ENCODE measurements at regions of chr2 and their contacts with region 1.

Region 1: DNA sequence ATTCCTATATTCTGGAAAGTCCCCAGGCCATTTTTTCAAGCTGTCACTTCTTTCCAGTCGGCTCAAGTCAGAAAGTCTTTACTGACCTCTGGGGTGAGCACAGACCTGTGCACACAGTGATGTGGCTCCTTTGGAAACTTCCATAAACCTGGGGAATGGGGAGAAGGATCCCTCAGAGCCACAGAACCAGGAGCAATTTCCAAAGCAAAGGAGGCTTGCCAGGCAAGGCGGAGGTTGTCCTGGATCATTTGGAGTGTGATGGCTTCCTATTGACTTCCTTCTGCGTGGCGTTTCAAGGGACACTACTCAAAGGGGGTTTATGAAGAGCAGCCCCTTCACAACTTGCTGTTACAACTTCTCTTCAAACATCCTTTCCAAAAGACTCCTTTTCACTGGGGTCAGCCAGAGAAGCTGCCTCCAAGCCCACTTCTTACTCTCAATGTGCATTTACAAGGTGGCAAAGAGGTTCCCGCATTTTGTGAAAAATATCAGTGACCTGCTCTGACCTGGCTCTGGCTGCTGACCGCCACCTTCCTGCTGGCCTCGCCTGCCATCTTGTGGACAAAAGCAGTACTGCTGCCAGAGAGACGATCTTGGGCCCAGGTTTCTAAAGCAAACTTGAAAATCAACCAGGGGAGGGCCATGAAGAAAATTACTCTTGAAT is 18.2 kb upstream of the TMEM247 start:
- DNase-seq: peak; percentile 65
- ATAC-seq: peak; percentile 79
- H3K4me3 ChIP-seq: no peak overlapping the region
- H3K27ac ChIP-seq: peak overlapping the region; percentile 6; the same call in 1 of the 2 replicates
- H3K4me1 ChIP-seq: peaks cover 15% of the 10 kb centered on the region
- H3K27me3 ChIP-seq: no peaks in the 10 kb centered on the region
- CTCF ChIP-seq: peak; percentile 97
- POLR2A ChIP-seq: peak; percentile 55; the same call in 1 of the 2 replicates
- RAD21 ChIP-seq: peak; percentile 100

Region 2: DNA sequence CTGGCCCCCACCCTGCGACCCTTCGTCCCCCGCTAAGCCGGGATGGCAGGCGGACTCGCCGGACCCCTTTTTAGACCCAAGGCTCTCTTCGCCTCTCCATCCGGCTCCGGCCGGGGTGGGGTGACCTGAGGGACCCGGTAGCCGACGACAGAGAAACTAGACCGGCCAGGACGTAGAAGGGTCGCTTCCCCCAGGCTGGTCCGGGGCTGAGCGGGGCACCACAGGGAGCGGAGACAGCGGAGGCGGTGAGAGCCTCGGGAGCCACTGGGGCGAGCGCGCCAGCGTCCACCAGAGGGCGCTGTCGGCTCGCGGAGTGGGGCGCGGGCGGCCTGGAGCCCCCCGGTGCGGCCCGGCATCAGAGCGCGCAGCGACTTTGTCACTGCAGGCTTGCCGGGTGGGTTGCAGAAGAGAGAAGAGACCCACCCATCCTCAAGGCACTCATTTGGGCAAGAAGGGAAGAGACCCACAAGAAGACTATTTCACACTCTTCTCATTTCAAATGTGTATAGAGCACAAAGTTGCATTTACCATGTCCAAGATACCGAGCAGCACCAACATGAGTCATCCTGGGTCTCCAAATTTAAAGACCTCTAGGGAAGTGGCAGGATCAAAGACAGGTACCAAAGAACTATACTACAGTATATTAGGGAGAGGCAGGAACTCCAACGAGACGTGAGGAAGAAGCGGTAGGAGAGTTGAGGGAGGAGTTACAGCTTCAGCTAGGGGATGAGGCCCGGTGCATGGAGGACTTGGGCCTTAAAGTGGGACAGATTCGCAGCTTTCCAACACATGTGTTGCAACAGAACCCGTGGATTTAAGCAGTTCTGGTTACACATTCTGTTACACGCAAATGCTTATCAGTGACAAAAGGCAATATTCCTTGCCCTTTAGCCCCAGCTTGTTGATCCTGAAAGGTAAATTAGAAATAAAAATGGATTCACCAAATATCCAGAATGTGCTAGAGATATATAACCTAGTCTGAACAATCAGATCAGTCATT is 817.3 kb before region 1 on chr2:
- CTCF ChIA-PET with region 1: no interaction called
- POLR2A ChIA-PET with region 1: no interaction called
- dilution Hi-C with region 1: no loop called
- in situ Hi-C with region 1: no loop called
- intact Hi-C with region 1: loop called (anchors 1 kb)
- DNase-seq: peak; percentile 31
- ATAC-seq: peak; percentile 99
- H3K4me3 ChIP-seq: peak overlapping the region; percentile 67
- H3K27ac ChIP-seq: peak overlapping the region; percentile 50; the same call in 1 of the 2 replicates
- H3K4me1 ChIP-seq: peaks cover 2% of the 10 kb centered on the region; the same call in 1 of the 2 replicates
- H3K27me3 ChIP-seq: peaks cover 34% of the 10 kb centered on the region
- CTCF ChIP-seq: peak; percentile 97
- POLR2A ChIP-seq: 0 out of 2 replicates have a peak, but pooled peaks have one; percentile 42
- RAD21 ChIP-seq: peak; percentile 99

Region 3: GRCh38 chr2:45821564-45822271 is 639.4 kb before region 1 on chr2:
- CTCF ChIA-PET with region 1: no interaction called
- POLR2A ChIA-PET with region 1: no interaction called
- dilution Hi-C with region 1: no loop called
- in situ Hi-C with region 1: no loop called
- intact Hi-C with region 1: no loop called
- DNase-seq: peak; percentile 69
- ATAC-seq: peak; percentile 19; the same call in 1 of the 2 replicates
- H3K4me3 ChIP-seq: no peak overlapping the region
- H3K27ac ChIP-seq: no peak overlapping the region
- H3K4me1 ChIP-seq: peaks cover 11% of the 10 kb centered on the region
- H3K27me3 ChIP-seq: no peaks in the 10 kb centered on the region
- CTCF ChIP-seq: no peak
- POLR2A ChIP-seq: no peak
- RAD21 ChIP-seq: no peak

Region 4: GRCh38 chr2:45993476-45993991 is 467.6 kb before region 1 on chr2:
- CTCF ChIA-PET with region 1: interaction called, 5 read pairs
- POLR2A ChIA-PET with region 1: no interaction called
- dilution Hi-C with region 1: no loop called
- in situ Hi-C with region 1: no loop called
- intact Hi-C with region 1: loop called (anchors 1 kb)
- DNase-seq: peak; percentile 89
- ATAC-seq: peak; percentile 73
- H3K4me3 ChIP-seq: no peak overlapping the region
- H3K27ac ChIP-seq: peak overlapping the region; percentile 8; the same call in 1 of the 2 replicates
- H3K4me1 ChIP-seq: peaks cover 19% of the 10 kb centered on the region
- H3K27me3 ChIP-seq: no peaks in the 10 kb centered on the region
- CTCF ChIP-seq: peak; percentile 85
- POLR2A ChIP-seq: no peak
- RAD21 ChIP-seq: peak; percentile 92

Region 5: DNA sequence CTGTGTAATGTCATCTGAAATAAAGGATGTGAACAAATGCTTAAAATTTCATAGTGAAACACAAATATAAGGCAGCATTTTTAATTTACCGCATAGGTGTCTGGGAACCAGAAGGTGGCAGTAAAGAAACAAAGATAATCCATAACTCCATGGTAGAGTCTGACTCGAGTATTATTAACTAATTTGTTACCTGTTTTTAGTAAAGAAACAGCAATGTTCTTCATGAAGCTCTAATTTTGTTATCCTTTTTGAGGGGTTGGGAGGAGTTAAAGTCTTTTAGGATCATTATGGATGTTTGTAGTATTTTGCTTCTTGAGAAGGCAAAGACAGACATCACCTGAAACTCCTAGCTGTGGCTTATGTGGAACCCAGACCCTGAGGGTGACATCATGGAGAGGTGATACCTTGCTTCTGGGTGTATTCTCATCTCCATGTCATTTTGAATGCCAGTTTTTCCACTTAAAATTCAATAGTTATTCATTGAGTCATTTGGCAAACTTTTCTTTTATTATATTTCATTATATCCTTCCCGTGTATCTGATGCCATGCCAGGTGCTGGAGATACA is 450.1 kb before region 1 on chr2:
- CTCF ChIA-PET with region 1: interaction called, 3 read pairs
- POLR2A ChIA-PET with region 1: no interaction called
- dilution Hi-C with region 1: no loop called
- in situ Hi-C with region 1: no loop called
- intact Hi-C with region 1: loop called (anchors 1 kb)
- DNase-seq: peak; percentile 74
- ATAC-seq: peak; percentile 59
- H3K4me3 ChIP-seq: no peak overlapping the region
- H3K27ac ChIP-seq: peak overlapping the region; percentile 48; the same call in 1 of the 2 replicates
- H3K4me1 ChIP-seq: peaks cover 38% of the 10 kb centered on the region
- H3K27me3 ChIP-seq: no peaks in the 10 kb centered on the region
- CTCF ChIP-seq: peak; percentile 76
- POLR2A ChIP-seq: no peak
- RAD21 ChIP-seq: peak; percentile 70

Region 6: DNA sequence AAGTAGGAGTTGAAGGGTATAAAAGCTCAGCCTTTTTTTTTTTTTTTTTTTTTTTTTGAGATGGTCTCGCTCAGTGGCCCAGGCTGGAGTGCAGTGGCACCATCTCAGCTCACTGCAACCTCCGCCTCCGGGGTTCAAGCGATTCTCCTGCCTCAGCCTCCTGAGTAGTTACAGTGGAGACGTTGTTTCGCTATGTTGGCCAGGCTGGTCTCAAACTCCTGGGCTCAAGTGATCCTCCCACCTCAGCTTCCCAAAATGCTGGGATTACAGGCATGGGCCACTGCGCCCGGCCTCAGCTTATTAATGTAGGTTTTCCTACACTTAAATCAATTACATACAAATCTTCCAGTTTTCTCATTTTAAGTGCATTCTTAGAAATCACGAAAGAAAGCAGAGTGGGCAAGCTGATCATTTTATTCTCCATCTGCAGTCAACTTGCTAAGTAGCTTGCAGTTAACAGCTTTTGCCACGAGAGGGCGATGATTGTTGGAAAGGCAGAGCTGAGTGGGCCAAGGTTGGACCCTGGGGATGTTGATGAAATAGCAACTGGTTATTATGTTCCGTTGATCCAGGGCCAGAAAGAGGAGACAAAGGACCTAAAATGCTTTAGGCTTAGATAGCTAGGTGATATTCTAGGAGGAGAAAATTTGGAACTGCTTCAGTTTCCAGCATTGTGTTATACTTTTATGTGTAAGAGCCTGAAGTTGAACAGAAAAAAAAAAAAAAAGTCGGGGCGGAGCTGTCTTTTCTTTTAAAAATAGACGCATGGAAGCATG is 398.3 kb before region 1 on chr2:
- CTCF ChIA-PET with region 1: no interaction called
- POLR2A ChIA-PET with region 1: no interaction called
- dilution Hi-C with region 1: no loop called
- in situ Hi-C with region 1: no loop called
- intact Hi-C with region 1: loop called (anchors 1 kb)
- DNase-seq: peak; percentile 87
- ATAC-seq: peak; percentile 66
- H3K4me3 ChIP-seq: no peak overlapping the region
- H3K27ac ChIP-seq: no peak overlapping the region
- H3K4me1 ChIP-seq: peaks cover 15% of the 10 kb centered on the region
- H3K27me3 ChIP-seq: no peaks in the 10 kb centered on the region
- CTCF ChIP-seq: peak; percentile 82
- POLR2A ChIP-seq: no peak
- RAD21 ChIP-seq: peak; percentile 95

Region 7: DNA sequence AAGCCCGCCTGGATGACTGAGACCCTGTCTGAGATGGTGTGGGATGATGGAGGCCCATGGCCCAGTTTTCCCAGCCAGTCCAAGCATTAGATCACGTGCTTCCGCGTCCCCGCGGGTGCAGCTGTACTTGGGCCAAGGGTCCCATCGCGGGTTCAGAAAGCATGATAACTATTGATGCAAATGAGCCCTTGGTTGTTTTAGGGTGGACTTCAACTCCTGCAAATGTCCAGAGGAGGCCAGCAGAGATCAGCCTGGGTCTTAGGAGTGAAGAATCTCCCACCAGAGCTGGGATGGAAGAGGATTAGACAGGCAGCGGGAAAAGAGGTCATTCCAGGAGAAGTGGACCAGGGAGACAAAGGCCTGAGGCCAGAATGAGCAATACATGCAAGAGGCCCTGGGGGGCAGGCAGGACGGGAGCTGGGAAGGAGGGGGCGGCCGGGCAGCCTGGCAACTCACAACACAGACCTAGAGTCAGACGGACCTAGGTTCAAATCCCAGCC is 71.7 kb before region 1 on chr2:
- CTCF ChIA-PET with region 1: no interaction called
- POLR2A ChIA-PET with region 1: no interaction called
- dilution Hi-C with region 1: no loop called
- in situ Hi-C with region 1: no loop called
- intact Hi-C with region 1: loop called (anchors 2 kb)
- DNase-seq: peak; percentile 25
- ATAC-seq: peak; percentile 12; the same call in 1 of the 2 replicates
- H3K4me3 ChIP-seq: no peak overlapping the region
- H3K27ac ChIP-seq: no peak overlapping the region
- H3K4me1 ChIP-seq: peaks cover 6% of the 10 kb centered on the region
- H3K27me3 ChIP-seq: no peaks in the 10 kb centered on the region
- CTCF ChIP-seq: 0 out of 2 replicates have a peak, but pooled peaks have one; percentile 13
- POLR2A ChIP-seq: no peak
- RAD21 ChIP-seq: no peak

Region 8: DNA sequence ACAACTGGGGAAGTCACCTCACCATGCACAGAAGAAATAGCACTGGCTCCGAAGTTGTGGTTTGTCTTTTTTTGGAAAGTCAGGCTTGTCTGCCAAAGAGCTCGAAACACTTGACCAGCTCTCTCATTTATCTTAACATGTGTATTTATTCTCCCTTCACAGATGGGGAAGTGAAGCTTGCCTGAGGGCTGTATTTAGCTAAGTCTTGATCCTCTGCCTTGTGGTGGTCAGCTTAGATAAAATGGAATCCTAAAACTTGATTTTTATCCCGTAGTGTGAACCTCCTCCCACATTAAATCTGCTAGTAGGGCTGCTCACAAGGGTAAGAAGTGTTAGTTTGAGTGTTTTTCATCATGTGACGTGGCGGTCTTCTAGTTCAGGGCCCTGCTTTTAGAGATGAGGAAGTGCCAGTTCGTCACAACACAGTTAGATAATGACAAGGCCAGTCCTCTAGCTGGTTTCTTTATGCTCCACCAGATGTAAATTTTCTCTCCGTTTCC is 108.0 kb after region 1 on chr2:
- CTCF ChIA-PET with region 1: no interaction called
- POLR2A ChIA-PET with region 1: no interaction called
- dilution Hi-C with region 1: no loop called
- in situ Hi-C with region 1: no loop called
- intact Hi-C with region 1: no loop called
- DNase-seq: peak; percentile 58
- ATAC-seq: peak; percentile 22; the same call in 1 of the 2 replicates
- H3K4me3 ChIP-seq: no peak overlapping the region
- H3K27ac ChIP-seq: no peak overlapping the region
- H3K4me1 ChIP-seq: peaks cover 21% of the 10 kb centered on the region
- H3K27me3 ChIP-seq: no peaks in the 10 kb centered on the region
- CTCF ChIP-seq: no peak
- POLR2A ChIP-seq: no peak
- RAD21 ChIP-seq: no peak